Mammary epithelial cell (primary cell): ENCODE measurements at regions of chr2 and their contacts with region 1.

Region 1: GRCh38 chr2:230453006-230453405 is 37.0 kb downstream of the SP100 start:
- DNase-seq: no peak
- H3K4me3 ChIP-seq: no peak overlapping the region
- H3K27ac ChIP-seq: no peak overlapping the region
- H3K4me1 ChIP-seq: no peaks in the 10 kb centered on the region
- H3K27me3 ChIP-seq: no peaks in the 10 kb centered on the region
- CTCF ChIP-seq: no peak

Region 2: GRCh38 chr2:230394301-230394700 is 58.7 kb before region 1 on chr2:
- CTCF ChIA-PET with region 1: no interaction called
- dilution Hi-C with region 1: loop called (anchors 5 kb)
- in situ Hi-C with region 1: no loop called
- intact Hi-C with region 1: no loop called
- DNase-seq: no peak
- H3K4me3 ChIP-seq: no peak overlapping the region
- H3K27ac ChIP-seq: no peak overlapping the region
- H3K4me1 ChIP-seq: no peaks in the 10 kb centered on the region
- H3K27me3 ChIP-seq: no peaks in the 10 kb centered on the region
- CTCF ChIP-seq: no peak